MCF 10A (cell line): ENCODE measurements at regions of chr20 and their contacts with region 1.

Region 1: DNA sequence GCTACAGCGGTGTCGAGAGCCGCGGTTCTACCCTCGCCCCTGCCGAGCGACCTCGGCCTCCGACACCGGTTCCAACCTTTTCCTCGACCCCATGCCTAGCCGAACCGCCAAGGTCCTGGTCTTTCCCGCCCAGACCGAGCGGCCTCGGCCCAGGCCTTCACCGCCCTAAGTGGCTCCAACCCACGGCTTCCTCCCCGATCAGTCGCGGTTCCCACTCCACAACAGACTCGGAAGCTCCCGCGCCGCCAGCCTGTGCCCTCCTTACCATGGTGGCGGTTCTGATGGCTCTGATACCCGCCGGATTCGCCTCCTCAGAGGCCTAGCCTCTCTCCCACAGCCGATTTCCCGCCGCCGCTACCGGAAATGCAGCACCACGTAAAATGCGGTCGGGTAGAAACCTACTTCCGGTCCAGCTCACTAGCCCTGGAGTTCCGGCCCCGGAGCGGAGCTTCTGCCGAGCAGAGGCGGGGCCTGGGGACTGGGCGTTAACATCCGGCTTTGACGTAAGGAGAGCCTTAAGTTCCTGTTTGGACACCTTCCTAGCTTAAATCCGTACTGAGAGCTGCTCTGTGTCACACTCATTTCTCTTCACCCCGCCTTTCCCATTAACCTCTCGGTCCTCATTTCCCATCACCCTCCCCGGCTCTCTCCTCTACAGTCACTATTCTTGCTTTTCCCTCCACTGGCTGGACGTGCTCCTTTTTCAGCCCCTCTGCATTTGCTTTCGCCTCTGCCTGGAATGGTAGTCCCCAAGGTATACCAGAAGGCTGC is at the start of gene SNRPB:
- DNase-seq: peak; percentile 98
- H3K4me3 Mint-ChIP-seq: peak within 1 kb of the TSS; percentile 96
- H3K27ac Mint-ChIP-seq: peak within 1 kb of the TSS; percentile 100
- H3K4me1 Mint-ChIP-seq: peaks cover 55% of the 10 kb centered on the region
- H3K27me3 Mint-ChIP-seq: no peaks in the 10 kb centered on the region
- CTCF ChIP-seq: no peak
- total RNA-seq, gene SNRPB: 236 and 240 TPM in 2 replicates

Region 2: DNA sequence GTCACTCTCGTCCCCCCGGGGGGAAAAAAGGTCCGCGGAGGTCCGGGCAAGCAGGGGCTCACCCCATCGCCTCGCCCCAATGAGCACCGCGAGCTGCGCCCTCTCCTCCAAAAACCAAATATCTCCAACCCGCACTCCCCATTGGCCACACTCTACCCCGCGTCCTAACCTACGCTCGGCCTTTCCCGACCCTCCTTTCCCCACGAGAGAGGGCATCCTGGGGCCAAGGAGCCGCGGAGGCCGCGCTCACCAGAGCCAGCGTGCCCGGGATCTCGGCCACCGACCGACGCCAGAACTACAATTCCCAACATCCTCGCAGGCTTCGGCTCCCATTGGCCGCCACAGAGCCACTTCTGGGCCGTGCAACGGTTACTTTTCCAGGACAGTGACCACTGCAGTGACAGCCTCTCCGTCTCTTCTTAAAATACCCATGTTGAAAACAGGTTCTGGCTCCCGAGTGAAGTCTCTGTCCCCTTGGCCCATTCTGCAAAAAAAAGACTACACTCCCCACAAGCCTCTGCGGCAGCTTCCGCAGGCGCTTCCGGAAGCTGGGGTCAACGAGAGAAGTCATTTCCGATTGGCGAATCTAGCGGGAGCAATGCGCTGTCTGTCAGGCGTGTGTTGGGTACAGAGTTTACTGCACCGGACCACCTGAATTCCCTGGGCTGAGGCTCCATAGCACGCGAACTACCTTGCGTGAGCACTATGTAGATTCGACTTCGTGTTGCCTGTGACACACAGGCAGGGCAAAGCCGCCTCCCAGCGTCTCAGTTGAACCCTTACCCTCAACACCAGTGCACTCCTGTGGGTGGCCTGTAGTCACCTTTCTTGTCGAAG is 38.2 kb after region 1 on chr20 and contains the start of gene ZNF343:
- CTCF ChIA-PET with region 1: no interaction called
- POLR2A ChIA-PET with region 1: interaction called, 40 read pairs
- intact Hi-C with region 1: no loop called
- DNase-seq: peak; percentile 82
- H3K4me3 Mint-ChIP-seq: peak within 1 kb of the TSS; percentile 88
- H3K27ac Mint-ChIP-seq: peak within 1 kb of the TSS; percentile 96
- H3K4me1 Mint-ChIP-seq: no peaks in the 10 kb centered on the region
- H3K27me3 Mint-ChIP-seq: no peaks in the 10 kb centered on the region
- CTCF ChIP-seq: no peak
- total RNA-seq, gene ZNF343: 16.6 and 17.5 TPM in 2 replicates

Region 3: DNA sequence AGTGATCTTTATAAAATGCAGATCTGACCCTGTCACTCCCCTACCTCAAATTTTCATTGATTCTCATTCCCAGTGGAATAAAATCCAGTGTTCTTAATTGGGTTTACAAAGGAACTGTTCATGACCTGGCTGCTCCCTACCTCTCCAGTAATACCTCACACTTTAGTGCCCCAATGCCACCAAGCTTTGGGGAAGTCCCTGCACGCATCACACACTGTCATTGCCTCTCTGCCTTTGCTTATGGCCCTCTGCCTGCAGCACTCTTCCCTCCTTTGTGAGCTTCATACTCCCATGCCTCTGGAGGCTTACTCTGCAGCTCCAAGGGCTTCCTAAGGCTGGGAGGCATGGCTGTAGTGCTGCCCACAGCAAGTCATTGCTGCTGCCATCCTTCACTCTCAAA is 123.1 kb after region 1 on chr20:
- CTCF ChIA-PET with region 1: no interaction called
- POLR2A ChIA-PET with region 1: no interaction called
- intact Hi-C with region 1: no loop called
- DNase-seq: no peak
- H3K4me3 Mint-ChIP-seq: no peak overlapping the region
- H3K27ac Mint-ChIP-seq: no peak overlapping the region
- H3K4me1 Mint-ChIP-seq: no peaks in the 10 kb centered on the region
- H3K27me3 Mint-ChIP-seq: peaks cover 40% of the 10 kb centered on the region
- CTCF ChIP-seq: no peak

Region 4: DNA sequence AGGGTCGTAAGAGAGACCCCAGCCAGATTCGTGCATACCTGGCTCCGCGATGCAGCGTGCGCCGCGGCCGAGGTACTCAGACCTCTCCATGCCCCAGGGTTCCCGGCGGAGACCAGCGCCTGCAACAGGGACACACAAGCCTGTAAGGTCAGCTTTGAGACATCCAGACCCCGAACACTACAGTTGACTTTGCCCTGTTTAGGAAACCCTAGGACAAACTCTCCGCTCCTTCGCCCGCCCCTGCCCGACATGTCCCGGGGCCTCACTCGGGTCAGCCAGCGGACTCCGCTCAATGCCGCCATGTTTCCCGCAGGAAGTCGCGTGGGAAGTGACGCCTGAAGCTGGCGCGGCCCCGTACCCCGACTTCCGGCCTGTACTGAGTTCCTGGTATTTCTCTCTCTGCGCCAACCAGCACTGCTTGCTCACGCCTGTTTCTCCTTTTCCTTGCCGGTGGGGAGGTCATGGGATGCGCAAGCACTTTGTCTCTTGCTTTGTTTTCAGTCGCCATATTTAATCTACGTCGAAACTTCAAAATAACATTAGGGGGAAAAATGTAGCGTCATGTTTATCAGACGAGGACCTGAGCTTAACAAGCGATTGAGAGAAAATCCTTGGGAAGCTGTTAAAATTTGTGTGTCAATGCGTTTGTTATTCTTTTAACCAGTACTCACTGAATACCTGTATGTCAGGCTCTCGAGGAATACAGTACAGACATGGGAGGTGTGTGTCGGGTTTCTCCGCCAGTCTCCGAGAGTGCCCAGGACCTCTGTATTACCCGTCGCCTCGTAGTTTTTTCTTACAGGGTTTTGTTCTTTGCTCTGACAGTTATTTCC is 193.5 kb after region 1 on chr20 and contains the start of gene IDH3B:
- CTCF ChIA-PET with region 1: interaction called, 3 read pairs
- POLR2A ChIA-PET with region 1: interaction called, 26 read pairs
- intact Hi-C with region 1: no loop called
- DNase-seq: peak; percentile 87
- H3K4me3 Mint-ChIP-seq: peak within 1 kb of the TSS; percentile 77
- H3K27ac Mint-ChIP-seq: peak within 1 kb of the TSS; percentile 96
- H3K4me1 Mint-ChIP-seq: peaks cover 16% of the 10 kb centered on the region
- H3K27me3 Mint-ChIP-seq: peaks cover 14% of the 10 kb centered on the region
- CTCF ChIP-seq: no peak
- total RNA-seq, gene IDH3B: 80.5 and 102 TPM in 2 replicates